CD8-positive, alpha-beta memory T cell (primary cell): ENCODE measurements at regions of chrX and their contacts with region 1.

Region 1: GRCh38 chrX:107827852-107828251 is 2.2 kb downstream of the MID2 start:
- DNase-seq: no peak
- H3K4me3 ChIP-seq: no peak overlapping the region
- H3K4me3 Mint-ChIP-seq: peak overlapping the region; percentile 72 to 89 (median 85)
- H3K27ac ChIP-seq: no peak overlapping the region
- H3K27ac Mint-ChIP-seq: peak overlapping the region in 2 of 8 donors; percentile 23 to 95
- H3K4me1 ChIP-seq: peaks cover 7% of the 10 kb centered on the region
- H3K4me1 Mint-ChIP-seq: peaks cover 22 to 70% (median 31%) of the 10 kb centered on the region in 3 donors
- H3K27me3 ChIP-seq: no peaks in the 10 kb centered on the region
- H3K27me3 Mint-ChIP-seq: peaks cover 7 to 8% of the 10 kb centered on the region in 2 donors

Region 2: DNA sequence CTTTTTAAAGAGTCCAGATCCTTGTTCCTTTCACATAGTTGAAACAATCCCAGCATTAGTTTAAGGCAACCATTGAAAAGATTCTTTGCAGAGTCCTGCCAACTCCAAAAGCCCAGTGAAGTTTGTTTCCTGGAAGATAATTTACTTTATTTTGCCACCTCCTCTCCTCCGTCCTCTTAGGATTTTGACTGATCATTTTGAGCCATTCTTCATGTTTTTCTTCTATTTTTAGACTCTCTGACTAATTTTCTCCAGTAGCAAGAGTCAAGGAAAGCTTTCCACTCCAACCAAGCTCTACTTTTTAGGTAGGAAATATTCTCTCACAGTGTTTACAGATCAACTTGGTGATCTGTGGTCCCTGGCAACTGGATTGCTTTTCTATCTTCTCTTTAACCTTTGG is 40.0 kb before region 1 on chrX:
- CTCF ChIA-PET with region 1: no interaction called
- POLR2A ChIA-PET with region 1: no interaction called
- DNase-seq: no peak
- H3K4me3 ChIP-seq: no peak overlapping the region
- H3K4me3 Mint-ChIP-seq: no peak overlapping the region
- H3K27ac ChIP-seq: no peak overlapping the region
- H3K27ac Mint-ChIP-seq: no peak overlapping the region
- H3K4me1 ChIP-seq: no peaks in the 10 kb centered on the region
- H3K4me1 Mint-ChIP-seq: no peaks in the 10 kb centered on the region
- H3K27me3 ChIP-seq: no peaks in the 10 kb centered on the region
- H3K27me3 Mint-ChIP-seq: peaks cover 2 to 4% of the 10 kb centered on the region in 2 donors

Region 3: DNA sequence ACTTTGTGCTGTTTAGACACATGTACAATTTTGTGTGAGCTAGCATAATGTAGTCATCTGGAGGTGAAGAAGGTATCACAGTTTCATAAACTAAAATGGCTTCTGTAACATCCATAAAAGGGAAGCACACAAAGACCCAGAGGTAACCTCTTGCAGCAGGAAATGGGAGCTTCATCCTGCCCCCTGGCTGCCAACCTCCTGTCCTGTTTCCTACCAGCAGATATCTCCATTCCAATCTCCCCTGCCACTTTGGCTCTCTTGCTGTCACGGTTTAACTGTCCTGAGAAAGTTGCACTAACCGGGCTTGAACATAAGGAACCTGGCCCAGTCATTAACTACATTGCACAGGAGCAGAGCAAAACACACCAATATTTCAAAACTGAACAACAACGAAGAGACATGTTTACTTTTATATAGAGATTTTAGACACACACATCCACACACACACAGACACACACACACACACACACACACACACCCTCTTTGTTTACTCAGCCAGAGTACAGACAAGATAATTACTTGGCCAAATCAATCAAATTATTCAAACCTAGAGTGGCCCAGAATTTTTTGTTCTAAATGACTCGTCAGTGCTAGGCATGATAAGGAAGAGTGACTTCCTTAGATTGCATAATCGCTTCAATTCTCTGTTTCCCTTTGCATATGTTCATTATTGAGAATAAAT is 22.0 kb after region 1 on chrX:
- CTCF ChIA-PET with region 1: no interaction called
- POLR2A ChIA-PET with region 1: interaction called, 14 read pairs
- DNase-seq: no peak
- H3K4me3 ChIP-seq: no peak overlapping the region
- H3K4me3 Mint-ChIP-seq: no peak overlapping the region
- H3K27ac ChIP-seq: no peak overlapping the region
- H3K27ac Mint-ChIP-seq: peak overlapping the region in 2 of 8 donors; percentile 7 to 11
- H3K4me1 ChIP-seq: no peaks in the 10 kb centered on the region
- H3K4me1 Mint-ChIP-seq: no peaks in the 10 kb centered on the region
- H3K27me3 ChIP-seq: no peaks in the 10 kb centered on the region
- H3K27me3 Mint-ChIP-seq: no peaks in the 10 kb centered on the region